ENCODE measurements at regions of chr2 and their contacts with region 1.

Region 1: DNA sequence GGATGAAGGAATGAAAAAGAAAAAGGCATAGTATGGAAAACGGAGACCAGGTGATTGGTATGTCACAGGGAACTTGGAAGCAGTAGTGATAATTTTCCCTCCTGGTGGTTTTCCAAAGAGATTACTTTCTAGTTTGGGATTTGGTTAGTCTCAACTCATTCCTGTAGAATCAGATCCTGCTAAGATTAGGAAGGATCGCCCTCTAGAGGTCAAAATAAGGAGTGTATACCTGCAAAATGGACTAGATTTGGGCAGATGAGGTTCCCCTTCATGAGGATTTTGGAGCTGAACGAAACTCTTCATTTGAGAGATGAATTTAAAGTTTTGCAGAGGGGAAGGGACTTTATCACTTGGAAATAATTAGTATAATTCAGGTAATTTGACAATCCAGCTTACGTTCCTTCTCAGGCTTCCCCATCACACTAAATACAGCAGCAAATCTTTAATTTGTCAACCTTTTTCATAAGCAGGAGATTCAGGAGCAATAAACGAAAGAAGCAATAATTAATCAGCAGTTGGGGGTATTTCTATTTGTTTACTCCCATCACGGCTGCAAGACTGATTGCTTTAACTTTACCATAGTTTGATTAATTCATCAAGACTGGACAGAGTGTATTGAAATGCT is 65.2 kb downstream of the CCDC195 start:
- DNase-seq: peak; percentile 72
- H3K4me3 ChIP-seq: no peak overlapping the region; a peak in 1 of 4 replicates
- H3K27ac ChIP-seq: no peak overlapping the region
- H3K4me1 ChIP-seq: no peaks in the 10 kb centered on the region
- H3K27me3 ChIP-seq: no peaks in the 10 kb centered on the region
- CTCF ChIP-seq: peak; percentile 91
- EP300 ChIP-seq: no peak
- RAD21 ChIP-seq: peak; percentile 91

Region 2: GRCh38 chr2:224357098-224357901 is 293.6 kb before region 1 on chr2:
- CTCF ChIA-PET with region 1: interaction called, 47 read pairs
- POLR2A ChIA-PET with region 1: no interaction called
- DNase-seq: peak; percentile 68
- H3K4me3 ChIP-seq: peak overlapping the region in 1 of 2 experiments; percentile 31; a peak in 1 of 4 replicates
- H3K27ac ChIP-seq: no peak overlapping the region
- H3K4me1 ChIP-seq: peaks cover 0 to 2% of the 10 kb centered on the region in 2 experiments; a peak in 1 of 4 replicates
- H3K27me3 ChIP-seq: no peaks in the 10 kb centered on the region; the same call in 1 of the 2 replicates
- CTCF ChIP-seq: peak; percentile 85
- EP300 ChIP-seq: no peak
- RAD21 ChIP-seq: peak; percentile 96

Region 3: GRCh38 chr2:224369028-224369632 is 281.8 kb before region 1 on chr2:
- CTCF ChIA-PET with region 1: interaction called, 36 read pairs
- POLR2A ChIA-PET with region 1: no interaction called
- DNase-seq: peak; percentile 49
- H3K4me3 ChIP-seq: no peak overlapping the region
- H3K27ac ChIP-seq: no peak overlapping the region
- H3K4me1 ChIP-seq: no peaks in the 10 kb centered on the region; a peak in 1 of 4 replicates
- H3K27me3 ChIP-seq: no peaks in the 10 kb centered on the region
- CTCF ChIP-seq: peak; percentile 82
- EP300 ChIP-seq: no peak
- RAD21 ChIP-seq: peak; percentile 60

Region 4: GRCh38 chr2:224449212-224450147 is 201.4 kb before region 1 on chr2:
- CTCF ChIA-PET with region 1: interaction called, 13 read pairs
- POLR2A ChIA-PET with region 1: no interaction called
- DNase-seq: peak; percentile 44
- H3K4me3 ChIP-seq: no peak overlapping the region
- H3K27ac ChIP-seq: no peak overlapping the region
- H3K4me1 ChIP-seq: no peaks in the 10 kb centered on the region
- H3K27me3 ChIP-seq: no peaks in the 10 kb centered on the region
- CTCF ChIP-seq: peak; percentile 68
- EP300 ChIP-seq: no peak
- RAD21 ChIP-seq: peak; percentile 62

Region 5: GRCh38 chr2:224638301-224638823 is 12.6 kb before region 1 on chr2:
- CTCF ChIA-PET with region 1: interaction called, 11 read pairs
- POLR2A ChIA-PET with region 1: no interaction called
- DNase-seq: no peak
- H3K4me3 ChIP-seq: no peak overlapping the region
- H3K27ac ChIP-seq: no peak overlapping the region
- H3K4me1 ChIP-seq: no peaks in the 10 kb centered on the region
- H3K27me3 ChIP-seq: no peaks in the 10 kb centered on the region
- CTCF ChIP-seq: no peak
- EP300 ChIP-seq: no peak
- RAD21 ChIP-seq: no peak

Region 6: GRCh38 chr2:224747765-224748164 is 96.8 kb after region 1 on chr2:
- CTCF ChIA-PET with region 1: no interaction called
- POLR2A ChIA-PET with region 1: no interaction called
- DNase-seq: no peak
- H3K4me3 ChIP-seq: no peak overlapping the region
- H3K27ac ChIP-seq: no peak overlapping the region
- H3K4me1 ChIP-seq: no peaks in the 10 kb centered on the region
- H3K27me3 ChIP-seq: no peaks in the 10 kb centered on the region
- CTCF ChIP-seq: no peak
- EP300 ChIP-seq: no peak
- RAD21 ChIP-seq: no peak

Region 7: GRCh38 chr2:224778474-224778877 is 127.5 kb after region 1 on chr2:
- CTCF ChIA-PET with region 1: interaction called, 22 read pairs
- POLR2A ChIA-PET with region 1: no interaction called
- DNase-seq: peak; percentile 55
- H3K4me3 ChIP-seq: peak overlapping the region in 1 of 2 experiments; percentile 36; a peak in 1 of 4 replicates
- H3K27ac ChIP-seq: no peak overlapping the region
- H3K4me1 ChIP-seq: no peaks in the 10 kb centered on the region
- H3K27me3 ChIP-seq: no peaks in the 10 kb centered on the region
- CTCF ChIP-seq: peak; percentile 93
- EP300 ChIP-seq: no peak
- RAD21 ChIP-seq: peak; percentile 81

Measured in SK-N-SH (cell line).